Activated CD8-positive, alpha-beta memory T cell treated with anti-CD3 and anti-CD28 coated beads, Interleukin-2, amount 10 ng/mL, durations not matched to agents 7 days and 5 days (primary cell): ENCODE measurements at regions of chr12 and their contacts with region 1.

Region 1: DNA sequence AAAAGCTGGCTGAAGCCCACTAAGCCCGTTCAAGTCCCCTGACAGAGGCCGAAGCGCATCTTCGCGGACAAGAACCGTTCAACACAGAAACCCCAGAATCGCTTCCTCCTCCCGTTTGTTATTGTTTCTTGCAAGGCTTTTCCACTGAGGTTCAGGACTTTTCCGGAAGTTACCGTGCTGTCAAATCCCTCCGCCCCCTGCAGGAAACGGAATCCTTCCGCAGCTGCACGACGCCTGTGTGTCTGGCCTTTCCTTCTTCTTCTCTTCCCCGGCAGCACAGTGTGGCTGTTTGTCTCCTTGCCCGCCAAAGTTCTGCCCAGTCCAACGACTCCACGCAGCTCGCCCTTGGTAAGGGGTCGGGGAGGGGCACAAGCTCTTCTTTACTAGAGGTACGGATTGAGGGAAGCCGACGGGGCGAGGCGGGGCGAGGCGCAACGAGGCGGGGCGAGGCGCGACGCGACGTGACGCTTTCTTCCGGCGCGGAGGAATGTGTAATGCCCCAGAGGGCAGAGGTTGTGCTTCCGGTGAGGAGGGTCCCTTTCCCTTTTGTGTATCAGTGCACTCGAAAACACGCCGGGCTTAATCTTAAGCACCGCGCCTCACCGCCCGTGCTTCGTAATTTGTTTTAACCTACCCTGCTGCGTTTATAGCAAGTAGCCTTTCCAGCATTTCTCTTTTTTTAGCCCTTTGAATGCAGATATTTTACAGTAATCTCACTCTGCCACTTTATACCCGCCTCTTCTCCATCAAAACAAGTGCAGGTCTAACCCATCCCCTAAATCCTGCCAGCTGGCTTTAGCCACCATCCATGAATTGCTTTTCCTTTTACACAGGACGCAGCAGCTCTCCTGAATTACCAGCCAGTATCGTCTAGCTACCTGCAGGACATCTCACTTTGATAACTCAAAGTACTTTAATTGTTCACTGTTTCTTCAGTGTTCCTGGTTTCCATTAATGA is at the start of gene KDM5A:
- DNase-seq: peak; percentile 94
- ATAC-seq: peak; percentile 96
- H3K4me3 Mint-ChIP-seq: peak within 1 kb of the TSS; percentile 88
- H3K27ac Mint-ChIP-seq: peak within 1 kb of the TSS; percentile 99
- H3K4me1 Mint-ChIP-seq: peaks cover 38% of the 10 kb centered on the region
- H3K27me3 Mint-ChIP-seq: no peaks in the 10 kb centered on the region
- total RNA-seq, gene KDM5A: 101 to 108 TPM

Region 2: DNA sequence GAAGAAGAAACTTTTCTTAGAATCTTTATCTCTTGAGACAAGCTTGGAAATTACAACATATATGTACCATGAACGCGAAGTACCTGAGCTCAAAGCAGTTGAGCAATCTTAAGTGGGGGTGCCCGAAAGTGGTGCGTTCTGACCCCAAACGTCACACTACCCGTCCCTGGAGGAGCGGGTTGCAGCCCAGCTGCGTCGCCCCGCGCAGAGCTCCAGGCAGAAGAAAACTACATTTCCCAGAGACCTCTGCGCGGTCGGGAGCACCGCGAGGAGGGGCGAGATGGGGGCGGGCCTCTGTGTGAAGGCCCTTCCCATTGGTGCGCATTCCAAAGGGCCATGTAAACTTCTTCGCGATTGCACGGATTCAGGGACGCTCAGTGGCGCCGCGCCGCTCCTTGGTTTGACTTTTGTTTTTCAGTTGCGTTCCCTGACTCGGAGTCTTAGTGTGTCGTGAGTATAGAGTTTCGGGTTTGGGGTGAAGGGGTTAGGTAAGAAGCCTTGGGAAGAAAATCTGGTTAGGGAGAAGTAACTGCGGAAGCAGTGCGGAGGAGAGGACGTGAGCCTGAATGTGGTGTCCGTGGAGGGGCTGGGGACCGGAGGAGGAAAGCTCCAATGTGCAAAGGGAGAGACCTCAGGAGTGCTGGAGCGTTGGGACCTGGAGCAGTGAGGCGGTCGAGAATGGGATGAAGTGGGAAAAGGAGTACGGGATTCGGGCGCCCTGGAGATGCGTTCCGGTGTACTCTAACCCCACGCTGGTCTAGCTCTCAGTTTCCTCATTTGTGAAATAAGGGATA is 12.0 kb after region 1 on chr12 and contains the start of gene CCDC77:
- CTCF ChIA-PET with region 1: interaction called, 39 read pairs
- DNase-seq: peak; percentile 95
- ATAC-seq: peak; percentile 100
- H3K4me3 Mint-ChIP-seq: no peak within 1 kb of the TSS
- H3K27ac Mint-ChIP-seq: no peak within 1 kb of the TSS
- H3K4me1 Mint-ChIP-seq: peaks cover 6% of the 10 kb centered on the region
- H3K27me3 Mint-ChIP-seq: no peaks in the 10 kb centered on the region
- total RNA-seq, gene CCDC77: 19.5 to 20.2 TPM

Region 3: DNA sequence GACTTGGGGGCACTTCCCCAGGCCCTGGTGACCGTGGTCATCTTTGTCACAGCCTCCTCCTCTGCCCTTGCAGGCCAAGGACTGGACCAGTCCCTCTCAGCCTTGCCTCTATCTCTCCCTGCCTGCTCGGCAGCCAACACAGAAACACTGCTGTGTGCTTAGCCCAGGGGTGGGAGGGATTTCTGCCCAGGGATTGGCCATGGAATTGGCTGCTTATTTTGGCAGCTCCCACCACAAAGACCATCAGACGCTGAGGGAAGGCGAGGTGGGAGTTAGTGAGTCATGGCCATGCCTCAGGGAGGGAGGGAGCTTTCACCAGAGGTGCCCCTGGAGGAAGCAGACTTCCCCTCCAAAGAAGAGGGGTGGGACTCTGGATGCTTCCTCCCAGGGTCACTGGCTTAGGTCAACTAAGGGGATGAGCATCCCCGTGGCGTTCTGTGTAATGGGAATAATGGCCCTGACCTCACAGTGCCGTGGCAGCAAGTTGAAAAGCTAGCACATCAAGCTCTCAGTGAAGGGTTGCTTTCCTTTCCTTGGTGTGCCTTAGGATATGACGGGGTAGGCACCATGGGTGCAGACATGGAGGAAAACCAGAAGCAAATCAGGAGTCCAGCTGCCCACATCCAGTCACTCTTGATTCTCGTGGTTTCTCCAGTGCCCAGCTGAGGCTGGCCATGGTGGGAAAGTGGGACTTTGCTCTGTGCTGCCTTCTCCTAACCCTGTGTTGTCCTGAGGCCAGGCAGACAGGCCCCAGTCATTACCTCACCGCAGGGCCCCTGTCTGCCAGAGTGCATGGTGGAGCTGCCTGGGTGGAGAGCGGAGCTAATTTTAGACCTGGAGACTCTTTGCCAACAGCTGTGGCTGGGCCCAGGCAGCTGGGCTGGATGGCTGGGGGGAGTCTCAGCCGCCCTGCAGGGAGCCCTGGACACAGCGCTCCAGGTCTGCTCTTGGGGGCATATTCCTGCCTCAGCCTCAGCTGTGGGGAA is 91.7 kb after region 1 on chr12:
- CTCF ChIA-PET with region 1: no interaction called
- DNase-seq: no peak
- ATAC-seq: no peak
- H3K4me3 Mint-ChIP-seq: no peak overlapping the region
- H3K27ac Mint-ChIP-seq: no peak overlapping the region
- H3K4me1 Mint-ChIP-seq: no peaks in the 10 kb centered on the region
- H3K27me3 Mint-ChIP-seq: peaks cover 21% of the 10 kb centered on the region